Activated CD4-positive, alpha-beta memory T cell treated with anti-CD3 and anti-CD28 coated beads for 36 hours (primary cell): ENCODE measurements at regions of chr2 and their contacts with region 1.

Region 1: DNA sequence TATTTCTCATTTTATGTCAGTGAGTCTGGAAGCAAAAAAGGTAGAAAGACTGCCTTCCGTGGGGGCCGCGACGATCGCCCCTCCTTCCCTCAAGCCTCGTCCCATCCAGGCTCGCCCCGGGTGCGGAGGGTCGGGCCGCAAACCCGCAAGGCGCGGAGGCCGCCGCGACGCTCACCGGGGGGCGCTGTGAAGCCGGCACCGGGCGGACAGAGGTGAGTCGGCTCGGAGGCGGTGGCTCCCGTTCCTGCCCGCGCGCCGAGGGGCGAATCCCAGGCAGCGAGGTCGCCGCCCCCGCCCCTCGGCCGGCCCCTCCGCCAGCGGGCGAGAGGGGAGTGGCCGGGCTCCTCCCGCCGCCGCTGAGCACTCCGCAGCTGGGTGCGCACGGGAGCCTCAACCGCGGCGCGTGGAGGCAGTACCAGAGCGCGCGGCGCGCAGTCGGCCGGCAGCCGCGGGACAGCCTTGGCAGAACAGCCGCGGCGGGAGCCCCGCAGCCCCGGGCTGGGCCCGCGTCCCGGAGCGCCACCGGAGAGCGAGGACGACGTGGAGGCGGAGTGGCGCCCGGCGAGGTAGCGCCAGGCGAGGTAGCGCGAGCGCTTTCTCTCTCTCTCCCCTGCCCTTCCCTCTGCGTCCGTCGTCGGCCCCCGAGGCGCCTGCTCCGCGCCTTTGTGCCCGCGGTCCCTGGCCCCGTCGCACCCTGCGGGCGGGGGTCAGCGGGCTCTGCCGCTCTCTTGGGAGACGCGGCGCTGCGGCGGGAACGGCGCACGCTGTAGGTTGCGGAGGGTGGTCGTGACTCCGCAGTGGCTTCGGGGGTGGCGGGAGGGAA is at the start of gene MYO1B:
- DNase-seq: peak; percentile 74
- H3K4me3 Mint-ChIP-seq: peak within 1 kb of the TSS; percentile 74
- H3K27ac Mint-ChIP-seq: no peak within 1 kb of the TSS
- H3K4me1 Mint-ChIP-seq: peaks cover 12% of the 10 kb centered on the region
- H3K27me3 Mint-ChIP-seq: peaks cover 15% of the 10 kb centered on the region
- total RNA-seq, gene MYO1B: 13.5 to 15.6 TPM

Region 2: DNA sequence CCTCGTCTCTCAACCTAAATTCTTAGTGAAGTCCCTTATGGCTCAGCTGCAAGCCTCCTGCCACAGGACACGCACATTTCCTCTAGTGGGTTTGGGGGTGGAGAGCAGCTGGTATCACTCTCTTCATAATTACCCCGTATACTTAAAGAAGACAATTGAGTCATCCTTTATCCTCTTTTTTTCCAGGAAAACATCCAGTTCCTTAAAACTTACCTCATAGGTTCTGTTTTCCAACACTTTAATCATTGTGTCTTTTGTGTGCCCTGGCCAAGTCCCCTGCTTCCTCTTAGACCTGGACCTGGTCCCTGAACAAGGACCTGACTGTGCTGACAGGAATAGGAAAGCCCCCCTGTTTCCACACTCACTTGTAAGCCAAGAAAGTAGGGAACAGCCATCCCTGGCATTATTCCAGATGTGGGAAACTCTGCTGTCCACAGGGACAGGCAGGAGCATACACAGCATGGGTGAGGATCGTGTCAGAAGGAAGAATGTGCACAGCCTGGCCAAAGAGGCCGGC is 42.3 kb before region 1 on chr2:
- CTCF ChIA-PET with region 1: no interaction called
- POLR2A ChIA-PET with region 1: no interaction called
- intact Hi-C with region 1: loop called (anchors 1 kb)
- DNase-seq: peak; percentile 42
- H3K4me3 Mint-ChIP-seq: no peak overlapping the region
- H3K27ac Mint-ChIP-seq: peak overlapping the region; percentile 70
- H3K4me1 Mint-ChIP-seq: peaks cover 46% of the 10 kb centered on the region
- H3K27me3 Mint-ChIP-seq: no peaks in the 10 kb centered on the region

Region 3: GRCh38 chr2:191521608-191522208 is 276.5 kb after region 1 on chr2:
- CTCF ChIA-PET with region 1: no interaction called
- POLR2A ChIA-PET with region 1: no interaction called
- intact Hi-C with region 1: loop called (anchors 10 kb)
- DNase-seq: no peak
- H3K4me3 Mint-ChIP-seq: no peak overlapping the region
- H3K27ac Mint-ChIP-seq: no peak overlapping the region
- H3K4me1 Mint-ChIP-seq: no peaks in the 10 kb centered on the region
- H3K27me3 Mint-ChIP-seq: peaks cover 1% of the 10 kb centered on the region